Activated CD8-positive, alpha-beta T cell treated with anti-CD3 and anti-CD28 coated beads for 36 hours (primary cell): ENCODE measurements at regions of chr6 and their contacts with region 1.

Region 1: DNA sequence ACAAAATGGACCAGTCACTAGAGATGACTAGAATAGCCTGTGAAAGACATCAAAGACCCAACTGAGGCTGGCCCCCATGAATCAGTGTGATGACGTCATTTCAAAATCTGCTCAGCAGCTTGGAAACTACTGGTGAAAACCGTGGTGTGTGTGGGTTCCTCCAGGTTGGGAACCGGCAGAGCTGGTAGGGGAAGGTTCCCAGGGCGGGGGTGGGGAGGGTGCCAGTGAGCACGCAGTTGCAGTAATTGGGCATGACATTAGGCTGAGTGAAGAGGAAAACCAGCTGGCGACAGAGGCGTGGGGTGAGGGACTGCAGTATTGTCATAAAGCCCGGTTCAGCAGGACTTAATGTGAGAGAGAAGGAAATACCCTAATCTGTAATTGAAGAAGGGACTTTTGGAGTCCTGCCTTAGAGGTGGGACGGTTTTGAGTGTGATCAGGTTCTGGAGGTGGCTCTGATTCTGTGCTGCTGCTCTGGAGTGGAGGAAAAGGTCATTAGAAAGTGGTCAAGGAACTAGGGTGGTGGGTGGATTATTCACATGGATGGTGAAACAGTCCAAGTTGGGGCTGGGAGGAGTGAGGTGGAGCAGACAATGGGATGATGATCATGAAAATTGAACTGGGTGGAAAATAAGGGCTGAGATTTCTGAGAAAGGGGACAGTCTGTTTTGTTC is 52.0 kb upstream of the MTHFD1L start:
- DNase-seq: peak; percentile 72
- ATAC-seq: peak; percentile 84
- H3K4me3 Mint-ChIP-seq: peak overlapping the region; percentile 8
- H3K27ac Mint-ChIP-seq: peak overlapping the region; percentile 90
- H3K4me1 Mint-ChIP-seq: peaks cover 25% of the 10 kb centered on the region
- H3K27me3 Mint-ChIP-seq: peaks cover 5% of the 10 kb centered on the region
- CTCF ChIP-seq: no peak

Region 2: GRCh38 chr6:150079604-150080003 is 733.9 kb before region 1 on chr6:
- CTCF ChIA-PET with region 1: interaction called, 15 read pairs
- POLR2A ChIA-PET with region 1: no interaction called
- intact Hi-C with region 1: loop called (anchors 5 kb)
- DNase-seq: peak; percentile 49
- ATAC-seq: peak; percentile 70
- H3K4me3 Mint-ChIP-seq: no peak overlapping the region
- H3K27ac Mint-ChIP-seq: no peak overlapping the region
- H3K4me1 Mint-ChIP-seq: peaks cover 20% of the 10 kb centered on the region
- H3K27me3 Mint-ChIP-seq: peaks cover 16% of the 10 kb centered on the region
- CTCF ChIP-seq: no peak

Region 3: GRCh38 chr6:150395398-150396009 is 418.0 kb before region 1 on chr6:
- CTCF ChIA-PET with region 1: interaction called, 43 read pairs
- POLR2A ChIA-PET with region 1: no interaction called
- intact Hi-C with region 1: no loop called
- DNase-seq: peak; percentile 61
- ATAC-seq: peak; percentile 71
- H3K4me3 Mint-ChIP-seq: no peak overlapping the region
- H3K27ac Mint-ChIP-seq: no peak overlapping the region
- H3K4me1 Mint-ChIP-seq: no peaks in the 10 kb centered on the region
- H3K27me3 Mint-ChIP-seq: peaks cover 5% of the 10 kb centered on the region
- CTCF ChIP-seq: peak; percentile 64

Region 4: GRCh38 chr6:150514599-150515401 is 298.7 kb before region 1 on chr6:
- CTCF ChIA-PET with region 1: interaction called, 6 read pairs
- POLR2A ChIA-PET with region 1: no interaction called
- intact Hi-C with region 1: loop called (anchors 10 kb)
- DNase-seq: no peak
- ATAC-seq: no peak
- H3K4me3 Mint-ChIP-seq: no peak overlapping the region
- H3K27ac Mint-ChIP-seq: no peak overlapping the region
- H3K4me1 Mint-ChIP-seq: peaks cover 2% of the 10 kb centered on the region
- H3K27me3 Mint-ChIP-seq: peaks cover 6% of the 10 kb centered on the region
- CTCF ChIP-seq: no peak

Region 5: GRCh38 chr6:150800674-150801314 is 12.7 kb before region 1 on chr6:
- CTCF ChIA-PET with region 1: interaction called, 14 read pairs
- POLR2A ChIA-PET with region 1: no interaction called
- intact Hi-C with region 1: no loop called
- DNase-seq: no peak
- ATAC-seq: no peak
- H3K4me3 Mint-ChIP-seq: no peak overlapping the region
- H3K27ac Mint-ChIP-seq: no peak overlapping the region
- H3K4me1 Mint-ChIP-seq: no peaks in the 10 kb centered on the region
- H3K27me3 Mint-ChIP-seq: no peaks in the 10 kb centered on the region
- CTCF ChIP-seq: no peak

Region 6: DNA sequence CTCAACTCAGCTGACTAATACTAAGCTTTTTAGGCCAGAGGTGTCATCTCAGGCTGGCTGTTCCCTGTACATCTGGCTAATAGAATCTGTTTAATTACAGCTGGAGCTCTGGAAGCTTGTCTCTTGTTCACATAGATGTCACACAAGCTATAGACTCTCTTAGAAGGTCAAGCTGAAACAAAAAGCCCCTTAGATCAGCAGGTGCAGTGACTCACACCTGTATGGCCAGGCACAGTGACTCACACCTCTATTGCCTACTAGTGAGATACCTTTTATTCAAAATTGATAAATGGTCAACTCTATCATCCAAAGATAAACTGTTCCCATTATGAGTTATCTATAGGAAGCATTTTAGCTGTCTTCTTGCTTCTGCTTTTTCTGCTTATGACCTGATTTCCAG is 22.2 kb after region 1 on chr6:
- CTCF ChIA-PET with region 1: interaction called, 15 read pairs
- POLR2A ChIA-PET with region 1: no interaction called
- intact Hi-C with region 1: no loop called
- DNase-seq: no peak
- ATAC-seq: peak; percentile 34
- H3K4me3 Mint-ChIP-seq: no peak overlapping the region
- H3K27ac Mint-ChIP-seq: no peak overlapping the region
- H3K4me1 Mint-ChIP-seq: no peaks in the 10 kb centered on the region
- H3K27me3 Mint-ChIP-seq: no peaks in the 10 kb centered on the region
- CTCF ChIP-seq: no peak

Region 7: GRCh38 chr6:150865406-150866146 is 52.1 kb after region 1 on chr6 and contains the start of gene MTHFD1L:
- CTCF ChIA-PET with region 1: interaction called, 16 read pairs
- POLR2A ChIA-PET with region 1: interaction called, 3 read pairs
- intact Hi-C with region 1: no loop called
- DNase-seq: peak; percentile 81
- ATAC-seq: peak; percentile 81
- H3K4me3 Mint-ChIP-seq: peak within 1 kb of the TSS; percentile 80
- H3K27ac Mint-ChIP-seq: peak within 1 kb of the TSS; percentile 94
- H3K4me1 Mint-ChIP-seq: peaks cover 31% of the 10 kb centered on the region
- H3K27me3 Mint-ChIP-seq: peaks cover 17% of the 10 kb centered on the region
- CTCF ChIP-seq: peak; percentile 52
- total RNA-seq, gene MTHFD1L: 155 to 158 TPM